Left ventricle myocardium superior (tissue), 1 donor: ENCODE measurements at regions of chr11 and their contacts with region 1.

Region 1: GRCh38 chr11:108647701-108648527 is 17.0 kb upstream of the DDX10 start:
- DNase-seq: peak; percentile 82
- ATAC-seq: peak; percentile 96

Region 2: DNA sequence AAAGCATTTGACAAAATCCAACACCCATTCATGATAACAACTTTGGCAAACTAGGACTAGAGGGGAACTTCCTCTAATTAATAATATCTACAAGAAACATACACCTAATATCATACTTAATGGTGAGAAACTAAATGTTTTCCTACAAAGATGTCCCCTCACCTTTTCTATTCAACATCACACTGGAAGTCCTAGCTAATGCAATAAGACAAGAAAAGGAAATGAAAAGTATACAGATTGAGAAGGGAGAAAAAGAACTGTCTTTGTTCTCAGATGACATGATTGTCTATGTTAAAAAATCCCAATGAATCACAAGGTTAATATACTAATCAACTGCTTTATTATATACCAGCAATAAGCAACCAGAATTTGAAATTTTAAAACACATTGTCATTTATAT is 233.0 kb before region 1 on chr11:
- intact Hi-C with region 1: loop called (anchors 5 kb)
- DNase-seq: no peak
- ATAC-seq: no peak

Region 3: DNA sequence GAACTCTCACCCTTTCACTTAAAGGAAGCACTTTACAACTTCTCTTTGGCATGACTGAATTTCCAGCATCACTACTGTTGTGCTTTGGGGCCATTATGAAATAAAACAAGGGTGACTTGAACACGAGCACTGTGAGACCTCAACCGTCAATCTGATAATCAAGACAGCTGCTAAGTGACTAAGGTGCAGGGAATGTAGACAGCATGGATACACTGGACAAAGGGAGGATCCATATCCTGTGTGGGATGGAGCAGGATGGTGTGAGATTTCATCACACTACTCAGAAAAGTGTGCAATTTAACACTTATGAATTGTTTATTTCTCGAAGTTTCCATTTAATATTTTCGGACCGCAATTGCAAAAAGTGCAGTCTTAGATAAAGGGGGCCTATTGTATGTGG is 38.2 kb before region 1 on chr11:
- intact Hi-C with region 1: no loop called
- DNase-seq: no peak
- ATAC-seq: no peak